ENCODE measurements at regions of chr13 and their contacts with region 1.

Region 1: GRCh38 chr13:98653463-98653985 is 76.6 kb upstream of the STK24 start:
- DNase-seq: peak; percentile 33
- H3K4me3 ChIP-seq: no peak overlapping the region
- H3K27ac ChIP-seq: no peak overlapping the region
- H3K27me3 ChIP-seq: peaks cover 3% of the 10 kb centered on the region
- CTCF ChIP-seq: peak; percentile 96

Region 2: GRCh38 chr13:98445340-98446233 is 207.9 kb before region 1 on chr13:
- CTCF ChIA-PET with region 1: interaction called, 68 read pairs
- POLR2A ChIA-PET with region 1: interaction called, 5 read pairs
- DNase-seq: no peak
- H3K4me3 ChIP-seq: no peak overlapping the region
- H3K27ac ChIP-seq: no peak overlapping the region
- H3K27me3 ChIP-seq: no peaks in the 10 kb centered on the region
- CTCF ChIP-seq: peak; percentile 98

Region 3: DNA sequence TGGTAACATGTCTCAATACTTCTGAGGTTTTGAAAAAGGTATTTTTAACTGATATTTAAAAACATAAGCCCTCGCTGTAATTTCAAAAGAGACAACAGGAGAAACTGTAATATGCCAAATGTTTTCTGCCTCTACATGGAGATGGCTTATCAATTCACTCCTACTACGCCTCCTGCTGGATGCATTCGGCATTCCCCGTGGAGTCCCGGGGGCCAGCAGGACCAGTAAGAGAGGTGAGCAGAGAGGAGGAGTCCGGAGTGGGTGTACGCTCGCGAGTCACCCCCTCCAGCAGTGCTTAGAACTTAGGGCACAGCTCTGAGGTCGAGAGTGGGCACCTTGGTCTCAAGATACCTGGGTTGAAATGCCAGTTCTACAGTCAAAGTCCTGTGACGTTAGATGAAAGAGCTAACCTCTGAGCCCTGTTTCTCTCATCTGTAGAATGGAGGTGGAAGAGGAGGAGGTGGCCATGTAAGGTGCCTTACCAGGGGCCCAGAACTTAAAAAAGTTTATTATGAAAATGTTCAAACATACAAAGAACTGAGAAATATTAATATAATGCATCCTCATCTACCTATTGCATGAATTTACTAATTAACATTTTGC is 186.8 kb before region 1 on chr13:
- CTCF ChIA-PET with region 1: interaction called, 20 read pairs
- POLR2A ChIA-PET with region 1: no interaction called
- DNase-seq: no peak
- H3K4me3 ChIP-seq: no peak overlapping the region
- H3K27ac ChIP-seq: no peak overlapping the region
- H3K27me3 ChIP-seq: no peaks in the 10 kb centered on the region
- CTCF ChIP-seq: peak; percentile 71

Region 4: DNA sequence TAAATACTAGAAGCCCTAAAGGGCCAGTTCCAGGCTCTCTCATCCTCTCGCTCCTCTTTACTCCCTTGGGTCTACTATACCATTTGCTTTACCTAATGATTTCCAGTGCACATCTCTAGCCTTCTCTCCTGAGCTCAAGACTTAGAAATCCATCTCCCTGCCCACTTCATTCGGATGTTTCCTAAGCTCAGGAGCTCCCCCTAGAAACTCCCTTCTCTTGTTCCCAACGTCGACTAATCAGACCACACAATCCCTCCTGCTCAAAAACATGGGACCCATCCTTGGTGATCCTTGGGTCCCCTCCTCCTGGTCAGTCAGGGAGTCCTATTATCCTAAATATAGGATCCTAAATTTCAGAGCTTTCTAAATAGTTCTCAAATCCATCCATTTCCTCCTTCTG is 55.5 kb before region 1 on chr13:
- CTCF ChIA-PET with region 1: interaction called, 13 read pairs
- POLR2A ChIA-PET with region 1: no interaction called
- DNase-seq: no peak
- H3K4me3 ChIP-seq: no peak overlapping the region
- H3K27ac ChIP-seq: no peak overlapping the region
- H3K27me3 ChIP-seq: peaks cover 8% of the 10 kb centered on the region
- CTCF ChIP-seq: peak; percentile 39

Region 5: GRCh38 chr13:98664924-98665637 is 11.6 kb after region 1 on chr13:
- CTCF ChIA-PET with region 1: interaction called, 14 read pairs
- POLR2A ChIA-PET with region 1: no interaction called
- DNase-seq: no peak
- H3K4me3 ChIP-seq: no peak overlapping the region
- H3K27ac ChIP-seq: no peak overlapping the region
- H3K27me3 ChIP-seq: peaks cover 17% of the 10 kb centered on the region
- CTCF ChIP-seq: no peak

Region 6: DNA sequence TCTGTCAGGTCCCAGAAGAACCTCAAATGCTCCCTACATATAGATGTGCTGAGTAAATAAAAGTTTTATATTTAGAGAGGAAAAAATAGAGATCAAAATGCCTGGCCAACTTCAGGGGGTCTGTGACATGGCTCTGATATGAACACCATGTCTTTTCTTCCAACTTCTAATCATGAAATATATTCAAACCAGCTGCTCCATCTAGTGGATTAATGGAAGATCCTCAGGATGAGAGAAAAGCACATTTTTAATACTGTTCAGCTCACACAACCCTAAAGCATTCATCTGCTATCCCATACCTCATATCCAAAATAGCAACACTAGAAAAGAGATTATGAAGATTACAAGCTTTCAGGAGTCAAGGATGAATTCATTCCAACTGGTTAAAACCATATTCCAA is 380.3 kb after region 1 on chr13:
- CTCF ChIA-PET with region 1: no interaction called
- POLR2A ChIA-PET with region 1: no interaction called
- DNase-seq: no peak
- H3K4me3 ChIP-seq: no peak overlapping the region
- H3K27ac ChIP-seq: no peak overlapping the region
- H3K27me3 ChIP-seq: no peaks in the 10 kb centered on the region
- CTCF ChIP-seq: peak; percentile 56

Measured in AG04450 (cell line).